CD4-positive, alpha-beta T cell (primary cell): ENCODE measurements at regions of chr12 and their contacts with region 1.

Region 1: DNA sequence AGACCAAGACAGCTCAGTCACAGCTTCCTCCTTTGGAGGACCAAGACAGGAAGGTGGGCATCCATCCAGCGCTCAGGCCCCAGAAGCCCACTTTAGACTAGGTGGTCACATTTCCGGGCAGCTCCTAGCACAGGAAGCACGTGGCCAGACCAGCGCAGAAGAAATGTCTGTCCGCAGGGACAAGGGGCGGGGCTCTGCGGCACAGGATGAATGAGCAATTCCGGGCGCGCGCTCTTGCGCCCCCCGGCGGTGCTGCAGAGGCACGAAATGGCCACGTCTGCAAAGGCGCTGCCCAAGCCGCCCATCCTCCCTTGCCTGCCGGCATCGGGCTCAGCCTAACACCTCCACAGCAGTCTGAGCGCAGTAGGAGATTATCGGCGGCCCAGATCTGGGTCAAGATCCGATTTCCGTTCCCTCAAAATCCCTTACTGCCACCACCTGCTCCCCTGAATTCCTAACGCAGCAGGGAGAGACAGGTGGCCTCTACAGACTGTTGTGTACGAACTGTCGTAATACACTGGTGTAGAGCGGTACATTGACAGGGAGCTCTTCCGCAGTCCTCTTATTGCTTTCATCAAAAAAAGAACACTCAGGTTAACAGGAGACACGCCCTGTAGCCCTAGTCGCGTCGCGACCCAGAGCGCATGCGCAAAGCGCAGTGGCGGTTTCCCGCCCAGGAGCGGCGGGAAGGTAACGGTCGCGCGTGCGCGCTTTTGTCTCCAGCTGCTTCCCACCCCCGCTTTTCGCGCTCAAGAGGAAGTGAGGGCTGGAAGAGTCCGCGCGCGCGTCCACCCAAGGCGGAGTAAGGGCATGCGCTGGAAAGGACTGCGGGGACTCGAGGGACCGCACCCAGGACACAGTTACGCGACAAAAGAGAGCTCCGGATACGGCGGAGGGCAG is 794 bp downstream of the TUBA1B start:
- DNase-seq: peak; percentile 85 to 98 (median 93)
- ATAC-seq: peak; percentile 75
- H3K4me3 ChIP-seq: peak overlapping the region; percentile 91
- H3K4me3 Mint-ChIP-seq: peak overlapping the region; percentile 99
- H3K27ac ChIP-seq: peak overlapping the region; percentile 94 to 98
- H3K27ac Mint-ChIP-seq: peak overlapping the region; percentile 98
- H3K4me1 ChIP-seq: peaks cover 33% of the 10 kb centered on the region
- H3K4me1 Mint-ChIP-seq: peaks cover 52% of the 10 kb centered on the region
- H3K27me3 ChIP-seq: no peaks in the 10 kb centered on the region
- H3K27me3 Mint-ChIP-seq: no peaks in the 10 kb centered on the region
- CTCF ChIP-seq: peak; percentile 90

Region 2: GRCh38 chr12:48716493-48717251 is 413.7 kb before region 1 on chr12 and contains the start of gene CCNT1:
- CTCF ChIA-PET with region 1: no interaction called
- POLR2A ChIA-PET with region 1: no interaction called
- intact Hi-C with region 1: loop called in 1 of 2 experiments (anchors 2 kb)
- DNase-seq: peak; percentile 94 to 100 (median 97)
- ATAC-seq: peak; percentile 87
- H3K4me3 ChIP-seq: peak within 1 kb of the TSS; percentile 84
- H3K4me3 Mint-ChIP-seq: peak within 1 kb of the TSS; percentile 88
- H3K27ac ChIP-seq: peak within 1 kb of the TSS; percentile 97 to 99
- H3K27ac Mint-ChIP-seq: peak within 1 kb of the TSS; percentile 91
- H3K4me1 ChIP-seq: peaks cover 37% of the 10 kb centered on the region
- H3K4me1 Mint-ChIP-seq: peaks cover 41% of the 10 kb centered on the region
- H3K27me3 ChIP-seq: no peaks in the 10 kb centered on the region
- H3K27me3 Mint-ChIP-seq: no peaks in the 10 kb centered on the region
- CTCF ChIP-seq: no peak
- total RNA-seq, gene CCNT1: 150 TPM

Region 3: GRCh38 chr12:49060237-49061156 is 69.9 kb before region 1 on chr12 and contains the start of gene KMT2D:
- CTCF ChIA-PET with region 1: interaction called, 6 read pairs
- POLR2A ChIA-PET with region 1: interaction called, 11 read pairs
- intact Hi-C with region 1: loop called in 1 of 2 experiments (anchors 5 kb)
- DNase-seq: peak; percentile 78 to 95 (median 86)
- ATAC-seq: peak; percentile 68
- H3K4me3 ChIP-seq: peak within 1 kb of the TSS; percentile 96
- H3K4me3 Mint-ChIP-seq: peak within 1 kb of the TSS; percentile 97
- H3K27ac ChIP-seq: peak within 1 kb of the TSS; percentile 90 to 93
- H3K27ac Mint-ChIP-seq: peak within 1 kb of the TSS; percentile 96
- H3K4me1 ChIP-seq: peaks cover 56% of the 10 kb centered on the region
- H3K4me1 Mint-ChIP-seq: peaks cover 55% of the 10 kb centered on the region
- H3K27me3 ChIP-seq: no peaks in the 10 kb centered on the region
- H3K27me3 Mint-ChIP-seq: no peaks in the 10 kb centered on the region
- CTCF ChIP-seq: no peak
- total RNA-seq, gene KMT2D: 107 to 110 TPM

Region 4: GRCh38 chr12:49098035-49098451 is 32.4 kb before region 1 on chr12:
- CTCF ChIA-PET with region 1: interaction called, 11 read pairs
- POLR2A ChIA-PET with region 1: interaction called, 42 read pairs
- intact Hi-C with region 1: no loop called
- DNase-seq: peak; percentile 36 to 80 (median 58)
- ATAC-seq: peak; percentile 73
- H3K4me3 ChIP-seq: no peak overlapping the region
- H3K4me3 Mint-ChIP-seq: no peak overlapping the region
- H3K27ac ChIP-seq: no peak overlapping the region
- H3K27ac Mint-ChIP-seq: no peak overlapping the region
- H3K4me1 ChIP-seq: peaks cover 15% of the 10 kb centered on the region
- H3K4me1 Mint-ChIP-seq: peaks cover 25% of the 10 kb centered on the region
- H3K27me3 ChIP-seq: peaks cover 16 to 20% of the 10 kb centered on the region in 2 experiments
- H3K27me3 Mint-ChIP-seq: peaks cover 28% of the 10 kb centered on the region
- CTCF ChIP-seq: peak; percentile 76

Region 5: GRCh38 chr12:49188914-49189367 is 58.5 kb after region 1 on chr12 and contains the start of gene TUBA1A:
- CTCF ChIA-PET with region 1: interaction called, 14 read pairs
- POLR2A ChIA-PET with region 1: interaction called, 374 read pairs
- intact Hi-C with region 1: loop called (anchors 1 kb)
- DNase-seq: peak; percentile 92 to 99 (median 94)
- ATAC-seq: peak; percentile 83
- H3K4me3 ChIP-seq: peak within 1 kb of the TSS; percentile 95
- H3K4me3 Mint-ChIP-seq: peak within 1 kb of the TSS; percentile 96
- H3K27ac ChIP-seq: peak within 1 kb of the TSS; percentile 98 to 100
- H3K27ac Mint-ChIP-seq: peak within 1 kb of the TSS; percentile 99
- H3K4me1 ChIP-seq: peaks cover 15% of the 10 kb centered on the region
- H3K4me1 Mint-ChIP-seq: peaks cover 21% of the 10 kb centered on the region
- H3K27me3 ChIP-seq: no peaks in the 10 kb centered on the region
- H3K27me3 Mint-ChIP-seq: no peaks in the 10 kb centered on the region
- CTCF ChIP-seq: no peak
- total RNA-seq, gene TUBA1A: 295 to 305 TPM

Region 6: GRCh38 chr12:49322708-49323523 is 192.5 kb after region 1 on chr12 and contains the start of gene TROAP:
- CTCF ChIA-PET with region 1: no interaction called
- POLR2A ChIA-PET with region 1: interaction called, 16 read pairs
- intact Hi-C with region 1: loop called in 1 of 2 experiments (anchors 5 kb)
- DNase-seq: peak; percentile 93 to 99 (median 95)
- ATAC-seq: peak; percentile 95
- H3K4me3 ChIP-seq: peak within 1 kb of the TSS; percentile 89
- H3K4me3 Mint-ChIP-seq: peak within 1 kb of the TSS; percentile 90
- H3K27ac ChIP-seq: peak within 1 kb of the TSS in 1 of 2 donors; percentile 3
- H3K27ac Mint-ChIP-seq: peak within 1 kb of the TSS; percentile 56
- H3K4me1 ChIP-seq: peaks cover 19% of the 10 kb centered on the region
- H3K4me1 Mint-ChIP-seq: peaks cover 19% of the 10 kb centered on the region
- H3K27me3 ChIP-seq: no peaks in the 10 kb centered on the region
- H3K27me3 Mint-ChIP-seq: no peaks in the 10 kb centered on the region
- CTCF ChIP-seq: no peak
- total RNA-seq, gene TROAP: 0.30 to 0.31 TPM

Region 7: DNA sequence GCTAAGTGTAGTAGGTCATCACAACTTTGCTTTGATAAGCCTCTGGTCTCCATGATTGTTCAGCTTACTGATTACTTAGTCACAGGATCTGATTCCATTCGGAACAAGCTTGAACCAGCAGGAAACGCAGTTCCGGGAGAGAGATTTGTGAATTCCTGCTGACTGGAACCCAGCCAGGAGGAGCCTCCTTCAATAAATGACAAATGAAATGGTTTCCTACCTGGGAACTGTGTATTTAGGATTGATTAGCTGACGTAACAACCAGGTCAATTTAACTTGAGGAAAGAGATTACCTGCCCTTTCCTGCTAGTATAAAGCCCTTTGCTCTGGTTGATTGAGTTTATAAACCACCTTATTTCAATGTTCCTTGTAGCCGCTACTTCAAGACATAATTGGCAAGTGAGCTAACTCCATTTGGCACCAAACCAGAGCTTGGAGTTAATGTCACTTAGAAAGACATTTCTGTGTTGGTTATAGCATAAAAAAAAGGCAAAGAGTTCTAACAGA is 373.3 kb after region 1 on chr12:
- CTCF ChIA-PET with region 1: no interaction called
- POLR2A ChIA-PET with region 1: no interaction called
- intact Hi-C with region 1: no loop called
- DNase-seq: no peak
- ATAC-seq: no peak
- H3K4me3 ChIP-seq: no peak overlapping the region
- H3K4me3 Mint-ChIP-seq: no peak overlapping the region
- H3K27ac ChIP-seq: no peak overlapping the region
- H3K27ac Mint-ChIP-seq: no peak overlapping the region
- H3K4me1 ChIP-seq: peaks cover 3% of the 10 kb centered on the region
- H3K4me1 Mint-ChIP-seq: peaks cover 14% of the 10 kb centered on the region
- H3K27me3 ChIP-seq: no peaks in the 10 kb centered on the region
- H3K27me3 Mint-ChIP-seq: no peaks in the 10 kb centered on the region
- CTCF ChIP-seq: no peak

Region 8: GRCh38 chr12:50006789-50007436 is 876.5 kb after region 1 on chr12:
- CTCF ChIA-PET with region 1: no interaction called
- POLR2A ChIA-PET with region 1: no interaction called
- intact Hi-C with region 1: no loop called
- DNase-seq: no peak
- ATAC-seq: no peak
- H3K4me3 ChIP-seq: no peak overlapping the region
- H3K4me3 Mint-ChIP-seq: no peak overlapping the region
- H3K27ac ChIP-seq: no peak overlapping the region
- H3K27ac Mint-ChIP-seq: no peak overlapping the region
- H3K4me1 ChIP-seq: no peaks in the 10 kb centered on the region
- H3K4me1 Mint-ChIP-seq: no peaks in the 10 kb centered on the region
- H3K27me3 ChIP-seq: no peaks in the 10 kb centered on the region
- H3K27me3 Mint-ChIP-seq: no peaks in the 10 kb centered on the region
- CTCF ChIP-seq: no peak